Colonic mucosa (tissue), 4 donors: ENCODE measurements at regions of chr7 and their contacts with region 1.

Region 1: GRCh38 chr7:32204361-32205018 is 134.3 kb upstream of the PDE1C start:
- DNase-seq: peak; percentile 33
- H3K4me3 ChIP-seq: peak overlapping the region; percentile 1
- H3K27ac ChIP-seq: no peak overlapping the region
- H3K4me1 ChIP-seq: no peaks in the 10 kb centered on the region
- H3K27me3 ChIP-seq: no peaks in the 10 kb centered on the region
- CTCF ChIP-seq: peak; percentile 59

Region 2: DNA sequence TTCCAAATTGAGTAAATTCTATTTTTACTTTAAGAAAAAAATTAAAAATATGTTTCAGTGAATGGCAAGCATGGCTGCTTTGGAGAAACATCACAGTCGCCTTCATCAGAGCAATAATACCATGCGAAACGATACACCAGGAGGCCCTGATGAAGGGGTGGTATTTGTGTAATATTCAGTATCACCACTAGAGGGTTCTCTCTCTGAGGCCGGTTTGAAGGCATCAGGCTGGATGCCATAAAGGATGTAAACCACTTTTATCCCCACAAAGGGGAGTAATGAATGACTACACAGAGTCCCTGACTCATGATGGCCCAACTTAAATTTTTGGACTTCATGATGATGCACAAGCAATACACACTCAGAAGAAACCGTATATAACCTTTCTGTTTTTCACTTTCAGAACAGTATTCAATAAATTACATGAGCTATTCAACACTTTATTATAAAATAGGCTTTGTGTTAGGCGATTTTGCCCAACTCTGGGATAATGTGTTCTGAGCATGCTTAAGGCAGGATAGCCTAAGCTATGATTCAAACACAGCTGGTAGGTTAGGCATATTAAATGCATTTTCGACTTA is 422.0 kb before region 1 on chr7:
- intact Hi-C with region 1: loop called (anchors 5 kb)
- DNase-seq: no peak
- H3K4me3 ChIP-seq: no peak overlapping the region
- H3K27ac ChIP-seq: no peak overlapping the region
- H3K4me1 ChIP-seq: no peaks in the 10 kb centered on the region
- H3K27me3 ChIP-seq: no peaks in the 10 kb centered on the region
- CTCF ChIP-seq: peak; percentile 71

Region 3: DNA sequence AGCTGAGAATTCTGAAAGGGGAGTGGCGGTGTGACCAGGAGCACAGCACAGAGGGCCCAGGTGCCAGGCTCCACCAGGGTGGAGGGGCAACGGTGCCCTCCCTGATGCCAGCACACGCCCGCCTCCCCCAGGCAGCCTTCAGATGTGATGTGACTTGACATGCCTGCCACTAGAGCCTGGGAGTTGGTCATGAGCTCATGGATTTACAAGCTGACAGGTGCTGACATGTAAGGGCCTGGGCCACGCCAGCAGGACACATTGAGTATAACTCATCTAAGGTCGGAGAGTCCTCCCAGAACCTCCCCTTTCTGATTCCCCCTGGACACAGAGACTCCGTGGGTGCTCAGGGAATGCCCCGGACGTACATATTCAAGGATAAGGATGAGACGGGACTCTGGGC is 211.4 kb after region 1 on chr7:
- intact Hi-C with region 1: no loop called
- DNase-seq: no peak
- H3K4me3 ChIP-seq: no peak overlapping the region
- H3K27ac ChIP-seq: no peak overlapping the region
- H3K4me1 ChIP-seq: no peaks in the 10 kb centered on the region
- H3K27me3 ChIP-seq: no peaks in the 10 kb centered on the region
- CTCF ChIP-seq: no peak

Region 4: DNA sequence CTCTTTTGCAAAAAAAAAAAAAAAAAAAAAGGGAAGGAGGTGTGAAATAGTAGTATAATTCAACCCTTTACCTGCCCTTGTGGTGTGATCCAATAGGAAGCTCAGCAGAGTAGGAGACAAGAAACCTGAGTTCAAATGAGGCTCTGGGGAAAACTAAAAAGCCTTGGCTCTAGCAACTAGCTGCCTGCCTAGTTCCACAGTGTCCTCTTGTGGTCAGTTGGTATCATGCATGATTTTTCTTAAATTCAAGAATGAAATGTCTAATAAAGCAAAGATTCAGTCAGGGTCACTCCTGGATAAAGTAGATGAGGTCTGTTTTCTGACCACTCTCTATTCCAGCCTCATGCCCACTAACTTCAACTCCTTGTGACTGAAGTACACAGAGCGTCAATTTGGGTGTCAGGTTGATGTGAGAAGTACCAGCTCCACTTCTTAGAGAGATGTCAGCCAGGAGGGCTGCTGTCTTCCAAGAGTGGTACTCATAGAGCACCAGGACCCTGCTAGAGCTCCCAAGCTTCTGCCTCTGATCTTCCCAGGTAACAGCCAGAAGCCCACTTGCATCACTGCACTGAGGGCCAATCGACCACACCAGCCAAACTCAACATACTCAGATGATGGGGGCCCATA is 275.2 kb after region 1 on chr7:
- intact Hi-C with region 1: loop called (anchors 5 kb)
- DNase-seq: peak; percentile 26
- H3K4me3 ChIP-seq: no peak overlapping the region
- H3K27ac ChIP-seq: no peak overlapping the region
- H3K4me1 ChIP-seq: no peaks in the 10 kb centered on the region
- H3K27me3 ChIP-seq: no peaks in the 10 kb centered on the region
- CTCF ChIP-seq: peak; percentile 81